ENCODE measurements at regions of chr5 and their contacts with region 1.

Region 1: GRCh38 chr5:176817841-176818377 is 7.5 kb downstream of the UNC5A start:
- DNase-seq: peak; percentile 73
- ATAC-seq: peak; percentile 68
- H3K4me3 Mint-ChIP-seq: peak overlapping the region; percentile 59
- H3K27ac Mint-ChIP-seq: no peak overlapping the region
- H3K4me1 Mint-ChIP-seq: peaks cover 49% of the 10 kb centered on the region
- H3K27me3 Mint-ChIP-seq: peaks cover 16% of the 10 kb centered on the region
- CTCF ChIP-seq: no peak

Region 2: DNA sequence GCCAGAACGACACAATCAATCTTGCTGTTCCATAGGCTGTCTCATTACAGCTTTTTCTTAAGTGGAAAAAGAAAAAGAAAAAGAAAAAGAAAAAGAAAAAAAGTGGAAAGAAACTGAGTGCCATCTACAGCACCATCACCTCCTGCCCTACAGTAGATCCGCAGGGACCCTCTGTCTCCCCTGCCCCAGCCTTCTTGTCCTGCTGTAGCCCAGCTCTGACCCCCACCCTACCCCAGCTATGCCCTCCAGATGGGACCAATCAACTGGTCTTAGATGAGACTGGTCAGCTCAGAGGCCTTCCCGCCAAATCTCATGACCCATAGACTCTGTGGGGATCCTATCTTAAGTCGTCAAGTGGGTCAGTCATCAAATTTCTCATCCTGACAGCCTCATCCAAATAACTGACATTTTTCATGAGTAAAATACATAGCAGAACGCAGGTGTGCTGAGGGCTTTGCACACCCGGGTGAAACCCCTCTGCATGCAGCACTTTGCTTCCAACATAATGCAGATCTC is 135.8 kb before region 1 on chr5:
- CTCF ChIA-PET with region 1: interaction called, 10 read pairs
- POLR2A ChIA-PET with region 1: interaction called, 3 read pairs
- DNase-seq: no peak
- ATAC-seq: no peak
- H3K4me3 Mint-ChIP-seq: no peak overlapping the region
- H3K27ac Mint-ChIP-seq: no peak overlapping the region
- H3K4me1 Mint-ChIP-seq: peaks cover 7% of the 10 kb centered on the region
- H3K27me3 Mint-ChIP-seq: peaks cover 6% of the 10 kb centered on the region
- CTCF ChIP-seq: no peak

Region 3: DNA sequence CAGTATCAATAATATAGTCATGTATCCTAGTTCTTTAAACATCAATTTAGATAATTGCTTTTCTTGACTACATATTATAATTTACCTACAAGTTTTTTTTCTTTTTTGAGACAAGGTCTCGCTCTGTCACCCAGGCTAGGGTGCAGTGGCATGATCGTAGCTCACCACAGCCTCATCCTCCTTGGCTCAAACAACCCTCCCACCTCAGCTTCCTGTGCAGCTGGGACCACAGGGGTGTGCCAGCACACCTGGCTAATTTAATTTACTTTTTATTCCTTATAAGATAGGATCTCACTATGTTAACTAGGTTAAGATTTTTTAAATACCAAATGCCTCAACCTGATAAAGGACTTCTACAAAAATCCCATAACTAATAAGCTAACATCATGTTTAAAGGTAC is 167.6 kb after region 1 on chr5:
- CTCF ChIA-PET with region 1: no interaction called
- POLR2A ChIA-PET with region 1: no interaction called
- DNase-seq: no peak
- ATAC-seq: no peak
- H3K4me3 Mint-ChIP-seq: no peak overlapping the region
- H3K27ac Mint-ChIP-seq: no peak overlapping the region
- H3K4me1 Mint-ChIP-seq: no peaks in the 10 kb centered on the region
- H3K27me3 Mint-ChIP-seq: no peaks in the 10 kb centered on the region
- CTCF ChIP-seq: no peak

Measured in WTC11 (cell line).